ENCODE measurements at regions of chr6 and their contacts with region 1.

Region 1: DNA sequence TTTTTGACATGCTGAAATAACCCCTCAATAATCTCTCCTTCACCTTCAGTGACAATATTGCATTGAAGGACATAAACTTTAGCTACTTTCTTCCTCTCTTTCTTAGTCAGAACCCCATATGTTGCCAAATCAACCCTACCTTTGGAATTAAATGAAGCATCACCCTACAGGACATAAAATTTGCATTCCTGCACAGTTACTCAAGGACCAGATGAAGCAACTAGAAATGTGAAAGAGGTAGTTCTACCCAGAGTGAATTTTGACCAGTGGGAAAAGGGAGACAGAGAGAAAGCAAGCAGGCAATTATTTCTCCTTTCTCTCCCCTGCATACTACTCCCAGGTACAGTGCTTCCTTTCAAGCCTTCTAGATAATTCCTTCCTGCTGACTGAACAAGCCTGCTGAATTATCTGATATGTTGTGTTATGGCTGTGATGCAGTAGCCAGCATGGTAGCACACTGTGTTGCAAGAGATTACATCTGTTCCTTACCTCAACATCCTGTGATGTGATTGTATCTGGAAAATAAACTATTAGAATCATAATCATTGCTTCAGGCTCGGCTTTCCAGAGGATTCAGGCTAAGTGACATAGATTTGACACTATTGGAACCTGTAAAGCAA is 16.6 kb downstream of the TENT5A start:
- DNase-seq: no peak
- ATAC-seq: no peak
- H3K4me3 ChIP-seq: no peak overlapping the region
- H3K27ac ChIP-seq: no peak overlapping the region
- H3K4me1 ChIP-seq: no peaks in the 10 kb centered on the region
- H3K27me3 ChIP-seq: no peaks in the 10 kb centered on the region
- CTCF ChIP-seq: no peak
- POLR2A ChIP-seq: no peak

Region 2: GRCh38 chr6:81683928-81684327 is 51.9 kb before region 1 on chr6:
- in situ Hi-C with region 1: no loop called
- intact Hi-C with region 1: loop called (anchors 5 kb)
- DNase-seq: no peak
- ATAC-seq: no peak
- H3K4me3 ChIP-seq: no peak overlapping the region
- H3K27ac ChIP-seq: no peak overlapping the region
- H3K4me1 ChIP-seq: no peaks in the 10 kb centered on the region
- H3K27me3 ChIP-seq: no peaks in the 10 kb centered on the region
- CTCF ChIP-seq: no peak
- POLR2A ChIP-seq: no peak

Region 3: DNA sequence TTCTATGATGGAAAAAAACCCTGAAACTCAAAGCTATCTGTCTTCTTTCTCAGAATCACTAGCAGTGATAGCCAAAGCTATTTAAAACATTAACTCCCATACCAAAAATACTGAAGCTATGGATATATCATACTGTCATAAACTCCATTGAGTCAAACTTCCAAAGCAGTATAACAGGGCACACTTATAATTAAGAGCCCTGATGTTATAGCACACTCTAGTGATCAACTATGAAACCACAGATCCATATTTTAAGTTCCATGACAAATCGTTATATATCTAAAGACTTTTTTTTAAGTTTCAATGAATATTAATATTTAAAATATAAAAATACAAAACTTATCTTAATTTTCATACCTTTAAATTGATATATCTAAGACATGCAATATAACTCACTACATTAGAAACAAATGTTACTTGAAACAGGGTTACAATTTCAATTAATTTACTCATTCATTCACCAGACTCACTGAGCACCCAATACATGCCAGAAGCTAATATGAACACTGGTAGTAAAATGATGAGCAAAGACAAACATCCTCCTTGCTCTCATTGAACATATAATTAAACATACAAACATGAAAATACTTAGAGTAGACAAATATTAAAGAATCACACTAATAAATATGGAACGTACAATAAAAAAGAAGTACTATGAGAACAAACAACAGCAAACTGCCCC is 442.3 kb after region 1 on chr6:
- in situ Hi-C with region 1: no loop called
- intact Hi-C with region 1: no loop called
- DNase-seq: no peak
- ATAC-seq: peak in 1 of 2 donors; percentile 33
- H3K4me3 ChIP-seq: no peak overlapping the region
- H3K27ac ChIP-seq: no peak overlapping the region
- H3K4me1 ChIP-seq: no peaks in the 10 kb centered on the region
- H3K27me3 ChIP-seq: no peaks in the 10 kb centered on the region
- CTCF ChIP-seq: peak in 3 of 5 experiments; percentile 20 to 46 (median 34)
- POLR2A ChIP-seq: no peak

Measured in gastrocnemius medialis (tissue), 4 donors.